ENCODE measurements at regions of chr15 and their contacts with region 1.

Region 1: GRCh38 chr15:67863442-67863987 is 23.7 kb upstream of the RNU6-1 start:
- DNase-seq: no peak
- H3K4me3 ChIP-seq: peak overlapping the region; percentile 34 to 50
- H3K27ac ChIP-seq: peak overlapping the region; percentile 66
- H3K4me1 ChIP-seq: peaks cover 13% of the 10 kb centered on the region
- H3K27me3 ChIP-seq: no peaks in the 10 kb centered on the region
- CTCF ChIP-seq: peak; percentile 92 to 94 (median 93)
- POLR2A ChIP-seq: no peak

Region 2: GRCh38 chr15:67559158-67559557 is 304.4 kb before region 1 on chr15:
- intact Hi-C with region 1: no loop called
- DNase-seq: no peak
- H3K4me3 ChIP-seq: no peak overlapping the region
- H3K27ac ChIP-seq: no peak overlapping the region
- H3K4me1 ChIP-seq: no peaks in the 10 kb centered on the region
- H3K27me3 ChIP-seq: no peaks in the 10 kb centered on the region
- CTCF ChIP-seq: no peak
- POLR2A ChIP-seq: no peak

Region 3: DNA sequence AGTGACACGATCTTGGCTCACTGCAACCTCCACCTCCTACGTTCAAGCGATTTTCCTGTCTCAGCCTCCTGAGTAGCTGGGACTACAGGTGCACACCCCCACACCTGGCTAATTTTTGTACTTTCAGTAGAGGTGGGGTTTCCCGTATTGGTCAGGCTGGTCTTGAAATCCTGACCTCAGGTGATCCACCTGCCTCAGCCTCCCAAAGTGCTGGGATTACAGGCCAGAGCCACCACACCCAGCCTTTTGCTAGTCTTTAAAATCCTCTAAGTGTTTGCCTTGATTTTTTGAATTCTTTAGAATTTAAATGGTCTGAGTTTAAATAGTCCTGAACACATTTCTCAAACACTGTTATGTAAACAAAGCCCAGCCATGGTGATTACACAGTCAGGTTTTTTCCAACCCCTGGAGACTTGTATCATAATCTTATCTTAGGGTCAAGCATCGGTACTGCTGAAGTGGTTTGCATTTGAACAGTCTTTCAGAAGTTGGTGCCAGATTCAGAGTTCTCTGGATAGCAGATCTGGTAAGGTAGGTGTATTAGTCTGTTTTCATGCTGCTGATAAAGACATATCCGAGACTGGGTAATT is 162.4 kb after region 1 on chr15:
- intact Hi-C with region 1: no loop called
- DNase-seq: no peak
- H3K4me3 ChIP-seq: no peak overlapping the region
- H3K27ac ChIP-seq: no peak overlapping the region
- H3K4me1 ChIP-seq: no peaks in the 10 kb centered on the region
- H3K27me3 ChIP-seq: no peaks in the 10 kb centered on the region
- CTCF ChIP-seq: no peak
- POLR2A ChIP-seq: no peak

Region 4: GRCh38 chr15:68154923-68155559 is 291.5 kb after region 1 on chr15:
- intact Hi-C with region 1: loop called (anchors 10 kb)
- DNase-seq: no peak
- H3K4me3 ChIP-seq: no peak overlapping the region
- H3K27ac ChIP-seq: no peak overlapping the region
- H3K4me1 ChIP-seq: peaks cover 10% of the 10 kb centered on the region
- H3K27me3 ChIP-seq: no peaks in the 10 kb centered on the region
- CTCF ChIP-seq: peak; percentile 13 to 62 (median 55)
- POLR2A ChIP-seq: no peak

Measured in vagina (tissue), 2 donors.